T-cell (primary cell): ENCODE measurements at regions of chr1 and their contacts with region 1.

Region 1: GRCh38 chr1:110209715-110210603 is at the start of gene KCNC4:
- DNase-seq: peak; percentile 81 to 96 (median 90)
- ATAC-seq: peak; percentile 87 to 91 (median 88)
- H3K4me3 ChIP-seq: peak within 1 kb of the TSS; percentile 67 to 76
- H3K4me3 Mint-ChIP-seq: peak within 1 kb of the TSS; percentile 79 to 90 (median 86)
- H3K27ac ChIP-seq: peak within 1 kb of the TSS; percentile 93
- H3K27ac Mint-ChIP-seq: peak within 1 kb of the TSS; percentile 91 to 94
- H3K4me1 ChIP-seq: peaks cover 8 to 52% of the 10 kb centered on the region in 2 experiments
- H3K4me1 Mint-ChIP-seq: peaks cover 56 to 60% (median 57%) of the 10 kb centered on the region in 3 donors
- H3K27me3 ChIP-seq: peaks cover 0 to 13% of the 10 kb centered on the region in 2 experiments
- H3K27me3 Mint-ChIP-seq: no peaks in the 10 kb centered on the region
- total RNA-seq, gene KCNC4: 11.0 to 19.4 (median 15.0) TPM

Region 2: DNA sequence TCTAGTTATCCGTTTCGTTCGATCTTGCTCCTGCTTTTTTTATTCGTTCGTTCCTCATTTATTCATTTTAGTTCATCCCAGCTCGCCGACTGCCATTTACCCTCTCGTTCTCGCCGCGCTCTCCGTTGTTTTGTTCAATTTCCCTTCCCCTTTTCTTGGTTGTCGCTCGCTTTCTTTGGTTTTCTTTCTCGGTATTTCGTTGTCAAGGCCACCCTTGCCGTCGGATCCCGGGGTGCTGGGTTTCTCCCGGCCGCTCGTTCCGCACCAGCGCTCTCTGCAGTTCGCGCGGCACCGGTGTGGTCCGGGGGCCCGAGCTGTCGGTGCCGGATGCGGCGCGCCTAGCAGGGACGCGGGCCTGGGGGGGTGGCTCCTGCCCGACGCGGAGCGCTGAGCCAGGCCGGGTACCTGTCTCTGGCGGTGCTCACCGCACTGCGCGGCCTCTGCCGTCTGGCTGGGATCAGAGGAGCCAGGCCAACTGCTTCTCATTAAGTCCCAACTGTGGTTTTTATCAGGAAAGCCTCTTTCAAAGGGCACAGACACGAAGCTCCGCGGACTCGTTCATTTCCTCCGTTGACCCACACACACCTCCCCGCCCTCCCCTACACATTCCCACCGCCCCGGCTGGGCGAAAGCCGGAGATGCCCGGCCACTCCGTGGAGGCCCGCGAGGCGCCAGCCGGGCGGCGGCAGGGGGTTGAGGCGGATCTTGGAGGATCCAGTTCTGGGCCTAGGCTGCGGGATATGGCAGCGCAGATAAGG is 141.1 kb before region 1 on chr1:
- CTCF ChIA-PET with region 1: no interaction called
- POLR2A ChIA-PET with region 1: no interaction called
- DNase-seq: peak in 17 of 35 experiments; percentile 11 to 49 (median 23)
- ATAC-seq: peak; percentile 59 to 68 (median 65)
- H3K4me3 ChIP-seq: peak overlapping the region in 1 of 2 donors; percentile 45
- H3K4me3 Mint-ChIP-seq: peak overlapping the region; percentile 22 to 69 (median 48)
- H3K27ac ChIP-seq: no peak overlapping the region
- H3K27ac Mint-ChIP-seq: peak overlapping the region in 1 of 2 donors; percentile 9
- H3K4me1 ChIP-seq: peaks cover 0 to 30% of the 10 kb centered on the region in 2 experiments
- H3K4me1 Mint-ChIP-seq: peaks cover 13 to 25% (median 19%) of the 10 kb centered on the region in 3 donors
- H3K27me3 ChIP-seq: peaks cover 14 to 74% of the 10 kb centered on the region in 2 experiments
- H3K27me3 Mint-ChIP-seq: peaks cover 36 to 63% of the 10 kb centered on the region in 2 donors

Region 3: GRCh38 chr1:110155878-110156522 is 54.0 kb before region 1 on chr1:
- CTCF ChIA-PET with region 1: no interaction called
- POLR2A ChIA-PET with region 1: no interaction called
- DNase-seq: peak in 25 of 35 experiments; percentile 5 to 53 (median 27)
- ATAC-seq: no peak
- H3K4me3 ChIP-seq: no peak overlapping the region
- H3K4me3 Mint-ChIP-seq: no peak overlapping the region
- H3K27ac ChIP-seq: no peak overlapping the region
- H3K27ac Mint-ChIP-seq: no peak overlapping the region
- H3K4me1 ChIP-seq: no peaks in the 10 kb centered on the region
- H3K4me1 Mint-ChIP-seq: peaks cover 0 to 2% (median 0%) of the 10 kb centered on the region in 3 donors
- H3K27me3 ChIP-seq: peaks cover 6 to 68% of the 10 kb centered on the region in 2 experiments
- H3K27me3 Mint-ChIP-seq: peaks cover 49 to 82% of the 10 kb centered on the region in 2 donors

Region 4: GRCh38 chr1:110312188-110313121 is 102.5 kb after region 1 on chr1:
- CTCF ChIA-PET with region 1: interaction called, 63 to 181 read pairs
- POLR2A ChIA-PET with region 1: no interaction called
- DNase-seq: peak; percentile 42 to 84 (median 66)
- ATAC-seq: peak; percentile 94 to 100 (median 97)
- H3K4me3 ChIP-seq: no peak overlapping the region
- H3K4me3 Mint-ChIP-seq: no peak overlapping the region
- H3K27ac ChIP-seq: no peak overlapping the region
- H3K27ac Mint-ChIP-seq: no peak overlapping the region
- H3K4me1 ChIP-seq: peaks cover 0 to 7% of the 10 kb centered on the region in 2 experiments
- H3K4me1 Mint-ChIP-seq: peaks cover 2 to 9% (median 3%) of the 10 kb centered on the region in 3 donors
- H3K27me3 ChIP-seq: no peaks in the 10 kb centered on the region
- H3K27me3 Mint-ChIP-seq: no peaks in the 10 kb centered on the region

Region 5: GRCh38 chr1:110318046-110318445 is 108.1 kb after region 1 on chr1:
- CTCF ChIA-PET with region 1: interaction called, 63 to 181 read pairs
- POLR2A ChIA-PET with region 1: no interaction called
- DNase-seq: no peak
- ATAC-seq: no peak
- H3K4me3 ChIP-seq: no peak overlapping the region
- H3K4me3 Mint-ChIP-seq: no peak overlapping the region
- H3K27ac ChIP-seq: no peak overlapping the region
- H3K27ac Mint-ChIP-seq: no peak overlapping the region
- H3K4me1 ChIP-seq: no peaks in the 10 kb centered on the region
- H3K4me1 Mint-ChIP-seq: peaks cover 0 to 1% (median 0%) of the 10 kb centered on the region in 3 donors
- H3K27me3 ChIP-seq: no peaks in the 10 kb centered on the region
- H3K27me3 Mint-ChIP-seq: peaks cover 0 to 3% of the 10 kb centered on the region in 2 donors

Region 6: GRCh38 chr1:110338886-110339406 is 129.0 kb after region 1 on chr1 and contains the start of gene RBM15:
- CTCF ChIA-PET with region 1: interaction called, 12 to 47 read pairs
- POLR2A ChIA-PET with region 1: interaction called in 1 of 2 experiments, 3 read pairs
- DNase-seq: peak; percentile 87 to 100 (median 96)
- ATAC-seq: peak; percentile 72 to 77 (median 74)
- H3K4me3 ChIP-seq: peak within 1 kb of the TSS; percentile 98
- H3K4me3 Mint-ChIP-seq: no peak within 1 kb of the TSS
- H3K27ac ChIP-seq: peak within 1 kb of the TSS; percentile 98
- H3K27ac Mint-ChIP-seq: no peak within 1 kb of the TSS
- H3K4me1 ChIP-seq: peaks cover 30 to 37% of the 10 kb centered on the region in 2 experiments
- H3K4me1 Mint-ChIP-seq: peaks cover 55 to 63% (median 57%) of the 10 kb centered on the region in 3 donors
- H3K27me3 ChIP-seq: no peaks in the 10 kb centered on the region
- H3K27me3 Mint-ChIP-seq: no peaks in the 10 kb centered on the region
- total RNA-seq, gene RBM15: 41.1 to 46.0 (median 43.7) TPM

Region 7: DNA sequence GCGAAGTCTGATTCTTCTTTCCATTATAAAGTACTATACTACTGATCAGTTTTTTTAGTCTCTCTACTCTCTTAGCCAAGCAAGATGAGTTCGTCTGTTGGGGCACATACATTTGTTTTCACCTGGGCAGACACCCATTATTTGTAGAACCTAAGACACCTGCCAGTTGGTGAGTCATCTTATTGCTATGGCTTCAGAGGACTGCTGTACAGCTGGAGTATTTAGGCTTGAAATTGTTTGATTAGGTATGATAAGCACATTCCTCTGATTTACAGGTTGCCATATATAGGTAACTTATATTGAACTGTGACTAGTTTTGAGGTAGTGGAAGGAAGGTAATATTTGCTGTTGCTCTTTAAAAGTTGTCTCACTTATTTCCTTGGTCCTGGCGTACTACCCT is 146.4 kb after region 1 on chr1:
- CTCF ChIA-PET with region 1: no interaction called
- POLR2A ChIA-PET with region 1: no interaction called
- DNase-seq: no peak
- ATAC-seq: no peak
- H3K4me3 ChIP-seq: no peak overlapping the region
- H3K4me3 Mint-ChIP-seq: no peak overlapping the region
- H3K27ac ChIP-seq: no peak overlapping the region
- H3K27ac Mint-ChIP-seq: no peak overlapping the region
- H3K4me1 ChIP-seq: no peaks in the 10 kb centered on the region
- H3K4me1 Mint-ChIP-seq: peaks cover 20 to 42% (median 33%) of the 10 kb centered on the region in 3 donors
- H3K27me3 ChIP-seq: no peaks in the 10 kb centered on the region
- H3K27me3 Mint-ChIP-seq: no peaks in the 10 kb centered on the region

Region 8: DNA sequence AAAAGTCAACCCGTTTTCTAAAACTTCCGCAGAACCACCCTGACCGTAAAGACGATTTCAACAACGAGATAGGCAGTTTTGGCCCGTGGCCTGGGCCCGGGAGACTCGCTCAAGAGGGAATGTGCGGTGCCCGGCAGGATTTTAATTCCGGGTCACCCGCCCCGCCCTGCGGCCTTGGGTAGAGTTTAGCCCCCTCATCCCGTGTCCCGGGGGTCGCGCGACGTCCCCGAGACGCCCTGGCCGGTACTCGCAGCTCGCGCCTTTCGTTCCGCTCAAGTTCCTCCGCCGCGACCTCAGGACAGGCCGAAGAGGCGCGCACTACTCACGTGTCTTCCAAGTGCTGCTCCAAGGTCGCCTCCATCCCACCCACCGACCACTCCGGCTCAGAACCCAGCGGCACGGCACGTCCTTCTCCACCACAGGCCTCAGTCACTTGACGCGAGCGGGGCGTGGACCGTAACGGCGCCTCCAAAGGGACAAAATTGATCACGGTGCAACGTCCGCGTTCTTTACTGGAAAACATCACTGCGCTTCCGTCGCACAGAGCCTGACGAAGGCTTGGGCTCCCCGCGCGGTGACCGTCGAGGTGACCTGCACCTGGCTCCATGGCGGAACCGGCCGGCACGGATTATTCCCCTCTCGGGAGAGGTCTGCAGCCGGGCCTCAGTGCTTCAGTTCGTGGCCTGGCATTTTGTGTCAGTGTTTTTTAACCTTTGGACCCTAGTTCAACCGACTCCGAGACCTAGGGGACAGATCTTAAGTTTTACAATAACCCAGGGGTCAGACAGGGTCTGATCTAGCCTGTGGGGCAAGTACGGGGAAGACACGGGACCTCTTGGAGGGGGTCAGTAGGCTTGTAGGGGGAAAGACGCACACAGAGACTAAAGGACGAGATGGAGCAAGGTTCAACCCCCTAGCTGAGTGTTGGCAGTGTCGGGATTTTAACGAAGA is 197.6 kb after region 1 on chr1 and contains the start of gene LAMTOR5:
- CTCF ChIA-PET with region 1: interaction called, 3 to 10 read pairs
- POLR2A ChIA-PET with region 1: no interaction called
- DNase-seq: peak; percentile 78 to 94 (median 86)
- ATAC-seq: peak; percentile 94 to 96 (median 96)
- H3K4me3 ChIP-seq: peak within 1 kb of the TSS; percentile 83 to 92
- H3K4me3 Mint-ChIP-seq: peak within 1 kb of the TSS; percentile 97 to 100 (median 98)
- H3K27ac ChIP-seq: peak within 1 kb of the TSS; percentile 85
- H3K27ac Mint-ChIP-seq: peak within 1 kb of the TSS; percentile 97 to 99
- H3K4me1 ChIP-seq: peaks cover 16% of the 10 kb centered on the region in 2 experiments
- H3K4me1 Mint-ChIP-seq: peaks cover 23 to 31% (median 30%) of the 10 kb centered on the region in 3 donors
- H3K27me3 ChIP-seq: no peaks in the 10 kb centered on the region
- H3K27me3 Mint-ChIP-seq: no peaks in the 10 kb centered on the region
- total RNA-seq, gene LAMTOR5: 60.0 to 68.6 (median 67.0) TPM

Region 9: GRCh38 chr1:110460253-110461220 is 250.6 kb after region 1 on chr1:
- CTCF ChIA-PET with region 1: interaction called, 13 to 65 read pairs
- POLR2A ChIA-PET with region 1: interaction called in 1 of 2 experiments, 3 read pairs
- DNase-seq: peak; percentile 55 to 89 (median 79)
- ATAC-seq: peak; percentile 90 to 92 (median 91)
- H3K4me3 ChIP-seq: no peak overlapping the region
- H3K4me3 Mint-ChIP-seq: no peak overlapping the region
- H3K27ac ChIP-seq: no peak overlapping the region
- H3K27ac Mint-ChIP-seq: no peak overlapping the region
- H3K4me1 ChIP-seq: no peaks in the 10 kb centered on the region
- H3K4me1 Mint-ChIP-seq: no peaks in the 10 kb centered on the region
- H3K27me3 ChIP-seq: peaks cover 0 to 10% of the 10 kb centered on the region in 2 experiments
- H3K27me3 Mint-ChIP-seq: peaks cover 3 to 4% of the 10 kb centered on the region in 2 donors

Region 10: GRCh38 chr1:110495926-110496600 is 286.1 kb after region 1 on chr1:
- CTCF ChIA-PET with region 1: interaction called, 6 to 13 read pairs
- POLR2A ChIA-PET with region 1: no interaction called
- DNase-seq: peak; percentile 36 to 86 (median 65)
- ATAC-seq: peak; percentile 70 to 85 (median 80)
- H3K4me3 ChIP-seq: no peak overlapping the region
- H3K4me3 Mint-ChIP-seq: no peak overlapping the region
- H3K27ac ChIP-seq: no peak overlapping the region
- H3K27ac Mint-ChIP-seq: no peak overlapping the region
- H3K4me1 ChIP-seq: no peaks in the 10 kb centered on the region
- H3K4me1 Mint-ChIP-seq: no peaks in the 10 kb centered on the region
- H3K27me3 ChIP-seq: peaks cover 0 to 10% of the 10 kb centered on the region in 2 experiments
- H3K27me3 Mint-ChIP-seq: peaks cover 0 to 4% of the 10 kb centered on the region in 2 donors